AG04449 (cell line): ENCODE measurements at regions of chr1 and their contacts with region 1.

Region 1: GRCh38 chr1:145906954-145907753 is 2.7 kb downstream of the ITGA10 start:
- DNase-seq: no peak
- H3K4me3 ChIP-seq: no peak overlapping the region
- CTCF ChIP-seq: no peak

Region 2: DNA sequence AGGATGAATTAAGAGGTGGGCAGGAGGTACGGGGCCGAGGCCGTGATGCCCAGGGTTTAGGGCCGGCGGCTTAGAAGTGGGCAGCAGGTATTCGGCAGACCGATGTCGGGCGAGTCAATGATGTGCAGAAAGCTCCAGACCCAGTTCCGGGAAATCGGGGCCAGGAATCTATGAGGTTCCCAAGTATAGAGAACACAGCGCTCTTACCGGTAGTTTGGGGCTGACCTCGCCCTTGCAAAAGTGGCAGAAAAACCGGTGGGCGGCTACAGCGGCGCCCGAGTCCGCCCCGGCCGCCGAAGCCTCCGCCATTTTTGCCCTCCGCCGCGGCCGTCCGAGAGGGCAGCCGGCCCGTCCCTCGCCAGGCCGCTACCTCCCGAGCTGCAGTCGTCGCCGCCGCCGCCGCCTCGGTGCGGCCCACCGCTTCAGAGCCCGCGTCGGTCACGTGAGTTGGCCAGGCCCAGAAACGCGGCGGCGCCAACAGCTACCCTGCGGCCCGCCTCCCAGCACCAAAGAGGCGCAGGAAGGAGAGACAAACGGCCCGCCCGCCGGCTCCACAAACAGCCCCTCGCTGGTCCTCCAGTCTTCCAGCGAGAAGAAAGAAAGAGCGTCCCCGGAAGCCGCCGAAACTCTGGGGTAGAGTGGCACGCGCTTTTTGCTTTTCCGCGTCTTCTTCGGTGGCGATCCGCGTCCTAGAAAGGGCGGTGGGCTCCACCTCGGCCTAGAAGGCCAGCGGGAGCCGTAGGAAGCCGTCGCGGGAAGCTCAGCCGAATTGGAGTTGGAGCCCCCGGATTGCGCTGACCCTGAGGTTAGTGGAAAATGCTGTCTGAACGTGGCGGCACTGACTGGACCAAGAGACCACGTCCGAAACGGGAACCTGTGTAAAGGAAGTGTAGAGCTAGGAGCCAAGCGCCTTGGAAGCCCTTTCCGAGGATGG is 83.3 kb before region 1 on chr1 and contains the starts of genes POLR3C and RNF115:
- CTCF ChIA-PET with region 1: no interaction called
- POLR2A ChIA-PET with region 1: no interaction called
- DNase-seq: peak; percentile 36
- H3K4me3 ChIP-seq: peak within 1 kb of the TSS; percentile 82
- CTCF ChIP-seq: no peak

Region 3: DNA sequence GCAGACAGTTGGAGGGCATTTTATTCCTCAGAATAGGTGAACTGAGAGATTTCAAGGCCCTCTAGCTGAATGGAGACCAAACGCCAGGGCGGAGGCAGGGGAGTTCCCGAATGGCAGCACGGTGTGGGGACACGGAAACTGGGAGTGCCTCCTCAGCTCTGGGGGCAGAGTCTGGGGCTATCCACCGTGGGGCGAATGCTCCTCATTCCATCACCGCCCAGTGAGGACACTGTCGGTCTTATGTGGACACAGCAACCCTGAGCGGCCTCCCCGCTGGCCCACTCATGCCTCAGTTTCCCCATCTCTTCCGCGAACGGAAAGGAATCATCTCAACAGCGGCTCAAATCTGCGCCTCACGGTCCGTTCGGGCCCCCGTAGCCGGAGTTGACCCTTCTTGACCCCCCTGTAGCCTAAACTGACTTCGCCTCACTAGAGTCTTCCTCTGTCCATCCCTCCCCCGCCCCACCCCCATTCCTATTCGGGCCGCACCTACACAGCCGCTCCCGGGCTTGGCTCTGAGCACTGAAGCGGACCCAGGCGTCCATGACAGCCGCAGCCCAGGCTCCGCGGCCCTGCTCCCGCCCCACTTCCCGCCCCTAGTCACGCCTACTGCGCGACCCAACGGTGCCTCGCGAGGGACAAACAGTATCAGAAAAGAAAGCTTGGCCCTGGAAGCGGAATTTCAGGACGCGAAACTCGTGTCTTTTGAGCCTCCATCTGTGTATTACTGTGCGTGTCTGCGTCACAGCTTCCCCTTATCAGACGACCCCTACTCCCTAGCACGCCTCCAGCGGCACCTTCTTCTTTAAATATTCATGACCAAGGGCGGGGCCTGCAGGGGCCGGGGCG is 11.2 kb after region 1 on chr1 and contains the start of gene PEX11B:
- CTCF ChIA-PET with region 1: interaction called, 16 read pairs
- POLR2A ChIA-PET with region 1: interaction called, 4 read pairs
- DNase-seq: peak; percentile 40
- H3K4me3 ChIP-seq: peak within 1 kb of the TSS; percentile 95
- CTCF ChIP-seq: no peak

Region 4: GRCh38 chr1:145927063-145927886 is 20.1 kb after region 1 on chr1 and contains the start of gene RBM8A:
- CTCF ChIA-PET with region 1: interaction called, 33 read pairs
- POLR2A ChIA-PET with region 1: no interaction called
- DNase-seq: peak; percentile 92
- H3K4me3 ChIP-seq: peak within 1 kb of the TSS; percentile 87
- CTCF ChIP-seq: peak; percentile 63

Region 5: DNA sequence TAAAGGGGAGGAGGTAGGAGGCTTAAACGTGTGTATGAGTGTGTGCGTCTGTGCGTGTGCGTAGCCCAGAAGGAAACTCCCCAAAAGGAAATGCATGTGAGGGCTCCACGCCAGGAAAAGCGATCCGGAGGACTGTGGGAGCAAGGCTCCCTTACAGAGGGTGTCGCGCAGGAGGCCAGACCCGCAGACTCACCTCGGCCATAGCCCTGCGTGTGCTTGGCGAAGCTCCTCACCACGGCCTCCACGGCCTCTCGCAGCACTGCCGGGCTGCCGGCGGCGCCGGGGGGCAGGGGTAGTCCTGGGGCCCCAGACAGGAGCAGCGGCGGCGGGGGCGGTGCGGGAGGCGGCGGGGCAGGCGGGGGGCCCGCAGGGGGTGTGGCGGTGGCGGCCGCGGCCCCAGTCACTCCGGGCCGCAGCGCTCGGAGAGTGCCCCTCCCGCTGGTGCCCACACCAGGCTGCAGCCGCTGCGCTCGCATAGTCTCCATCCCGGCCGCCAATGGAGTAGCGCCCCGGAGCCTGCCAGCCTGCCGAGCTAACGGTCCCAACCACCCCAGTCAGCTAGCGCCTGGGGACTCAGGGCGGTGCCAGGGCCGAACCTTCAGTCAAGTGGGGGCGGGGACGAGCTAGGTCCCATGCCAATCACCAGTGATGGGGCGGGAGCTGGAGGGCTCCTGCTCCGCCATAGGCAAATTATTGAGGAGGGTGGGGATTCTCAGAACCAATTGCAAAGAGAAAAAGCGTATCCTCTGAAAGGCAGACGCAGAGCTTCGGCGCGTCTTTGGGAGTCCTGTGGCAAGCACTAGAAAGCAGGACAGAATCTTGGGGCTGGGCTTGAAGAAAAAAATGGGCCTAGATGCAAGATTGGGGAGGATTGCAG is 50.5 kb after region 1 on chr1 and contains the start of gene LIX1L:
- CTCF ChIA-PET with region 1: interaction called, 11 read pairs
- POLR2A ChIA-PET with region 1: no interaction called
- DNase-seq: no peak
- H3K4me3 ChIP-seq: peak within 1 kb of the TSS; percentile 82
- CTCF ChIP-seq: no peak

Region 6: GRCh38 chr1:146049436-146049835 is 142.3 kb after region 1 on chr1:
- CTCF ChIA-PET with region 1: no interaction called
- POLR2A ChIA-PET with region 1: no interaction called
- DNase-seq: no peak
- H3K4me3 ChIP-seq: no peak overlapping the region
- CTCF ChIP-seq: no peak